Activated B cell treated with CpG ODN at 0.5 μM for 24 hours (primary cell): ENCODE measurements at regions of chr2 and their contacts with region 1.

Region 1: GRCh38 chr2:230582851-230583283 is 129.8 kb upstream of the CAB39 start:
- DNase-seq: no peak
- ATAC-seq: peak; percentile 81
- H3K4me3 Mint-ChIP-seq: peak overlapping the region; percentile 42
- H3K27ac Mint-ChIP-seq: peak overlapping the region; percentile 92
- H3K4me1 Mint-ChIP-seq: peaks cover 53% of the 10 kb centered on the region
- H3K27me3 Mint-ChIP-seq: no peaks in the 10 kb centered on the region
- CTCF ChIP-seq: no peak

Region 2: GRCh38 chr2:230296917-230297316 is 285.9 kb before region 1 on chr2:
- CTCF ChIA-PET with region 1: no interaction called
- POLR2A ChIA-PET with region 1: no interaction called
- intact Hi-C with region 1: no loop called
- DNase-seq: no peak
- ATAC-seq: no peak
- H3K4me3 Mint-ChIP-seq: no peak overlapping the region
- H3K27ac Mint-ChIP-seq: no peak overlapping the region
- H3K4me1 Mint-ChIP-seq: peaks cover 5% of the 10 kb centered on the region
- H3K27me3 Mint-ChIP-seq: no peaks in the 10 kb centered on the region
- CTCF ChIP-seq: no peak

Region 3: GRCh38 chr2:230447455-230448451 is 135.1 kb before region 1 on chr2:
- CTCF ChIA-PET with region 1: no interaction called
- POLR2A ChIA-PET with region 1: interaction called, 15 read pairs
- intact Hi-C with region 1: no loop called
- DNase-seq: no peak
- ATAC-seq: peak; percentile 81
- H3K4me3 Mint-ChIP-seq: peak overlapping the region; percentile 83
- H3K27ac Mint-ChIP-seq: peak overlapping the region; percentile 99
- H3K4me1 Mint-ChIP-seq: peaks cover 93% of the 10 kb centered on the region
- H3K27me3 Mint-ChIP-seq: no peaks in the 10 kb centered on the region
- CTCF ChIP-seq: no peak

Region 4: DNA sequence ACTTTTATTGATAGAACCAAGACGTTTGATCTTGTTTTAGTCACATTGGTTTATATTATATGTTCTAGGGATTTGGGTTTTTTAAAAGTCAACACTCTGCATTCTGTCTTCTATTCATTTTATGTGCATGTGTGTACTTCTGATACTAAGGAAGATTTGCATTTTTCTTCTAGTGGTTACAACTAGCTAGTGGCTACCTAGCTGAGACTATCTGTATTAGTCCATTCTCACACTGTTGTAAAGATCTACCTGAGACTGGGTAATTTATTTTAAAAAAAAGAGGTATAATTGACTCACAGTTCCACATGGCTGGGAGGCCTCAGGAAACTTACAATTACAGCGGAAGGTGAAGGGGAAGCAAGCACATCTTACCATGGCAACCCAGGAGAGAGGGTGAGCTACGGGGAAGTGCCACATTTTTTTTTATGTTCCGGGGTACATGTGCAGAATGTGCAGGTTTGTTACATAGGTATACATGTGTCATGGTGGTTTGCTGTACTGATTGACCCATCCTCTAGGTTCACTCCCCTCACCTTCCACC is 97.0 kb before region 1 on chr2:
- CTCF ChIA-PET with region 1: no interaction called
- POLR2A ChIA-PET with region 1: interaction called, 12 read pairs
- intact Hi-C with region 1: no loop called
- DNase-seq: no peak
- ATAC-seq: no peak
- H3K4me3 Mint-ChIP-seq: no peak overlapping the region
- H3K27ac Mint-ChIP-seq: peak overlapping the region; percentile 56
- H3K4me1 Mint-ChIP-seq: peaks cover 31% of the 10 kb centered on the region
- H3K27me3 Mint-ChIP-seq: no peaks in the 10 kb centered on the region
- CTCF ChIP-seq: no peak

Region 5: GRCh38 chr2:230602562-230603230 is 19.8 kb after region 1 on chr2:
- CTCF ChIA-PET with region 1: interaction called, 3 read pairs
- POLR2A ChIA-PET with region 1: interaction called, 63 read pairs
- intact Hi-C with region 1: loop called (anchors 1 kb)
- DNase-seq: peak; percentile 41
- ATAC-seq: peak; percentile 80
- H3K4me3 Mint-ChIP-seq: peak overlapping the region; percentile 66
- H3K27ac Mint-ChIP-seq: peak overlapping the region; percentile 96
- H3K4me1 Mint-ChIP-seq: peaks cover 94% of the 10 kb centered on the region
- H3K27me3 Mint-ChIP-seq: no peaks in the 10 kb centered on the region
- CTCF ChIP-seq: no peak